Left lung (tissue), 14 donors: ENCODE measurements at regions of chr17 and their contacts with region 1.

Region 1: GRCh38 chr17:45640141-45640850 is 143.8 kb upstream of the CRHR1 start:
- DNase-seq: peak in 3 of 4 donors; percentile 47 to 79 (median 60)
- ATAC-seq: peak; percentile 95
- H3K4me3 ChIP-seq: no peak overlapping the region
- H3K27ac ChIP-seq: no peak overlapping the region
- H3K4me1 ChIP-seq: no peaks in the 10 kb centered on the region
- H3K27me3 ChIP-seq: peaks cover 0 to 3% of the 10 kb centered on the region in 2 donors
- CTCF ChIP-seq: peak; percentile 89

Region 2: GRCh38 chr17:45834471-45835396 is 194.4 kb after region 1 on chr17:
- intact Hi-C with region 1: loop called in 1 of 2 experiments (anchors 5 kb)
- DNase-seq: peak in 1 of 4 donors; percentile 67
- ATAC-seq: no peak
- H3K4me3 ChIP-seq: no peak overlapping the region
- H3K27ac ChIP-seq: no peak overlapping the region
- H3K4me1 ChIP-seq: peaks cover 0 to 5% of the 10 kb centered on the region in 2 donors
- H3K27me3 ChIP-seq: peaks cover 0 to 59% of the 10 kb centered on the region in 2 donors
- CTCF ChIP-seq: no peak